Heart left ventricle (tissue), 16 donors: ENCODE measurements at regions of chr10 and their contacts with region 1.

Region 1: GRCh38 chr10:76303682-76304316 is 872.4 kb downstream of the LRMDA start:
- DNase-seq: peak; percentile 64 to 85 (median 74)
- ATAC-seq: peak; percentile 95 to 99 (median 98)
- H3K4me3 ChIP-seq: no peak overlapping the region
- H3K27ac ChIP-seq: peak overlapping the region in 3 of 12 donors; percentile 25 to 62 (median 58)
- H3K4me1 ChIP-seq: peaks cover 0 to 30% (median 15%) of the 10 kb centered on the region in 12 donors
- H3K27me3 ChIP-seq: no peaks in the 10 kb centered on the region
- CTCF ChIP-seq: peak; percentile 41 to 75 (median 61)
- POLR2A ChIP-seq: no peak

Region 2: DNA sequence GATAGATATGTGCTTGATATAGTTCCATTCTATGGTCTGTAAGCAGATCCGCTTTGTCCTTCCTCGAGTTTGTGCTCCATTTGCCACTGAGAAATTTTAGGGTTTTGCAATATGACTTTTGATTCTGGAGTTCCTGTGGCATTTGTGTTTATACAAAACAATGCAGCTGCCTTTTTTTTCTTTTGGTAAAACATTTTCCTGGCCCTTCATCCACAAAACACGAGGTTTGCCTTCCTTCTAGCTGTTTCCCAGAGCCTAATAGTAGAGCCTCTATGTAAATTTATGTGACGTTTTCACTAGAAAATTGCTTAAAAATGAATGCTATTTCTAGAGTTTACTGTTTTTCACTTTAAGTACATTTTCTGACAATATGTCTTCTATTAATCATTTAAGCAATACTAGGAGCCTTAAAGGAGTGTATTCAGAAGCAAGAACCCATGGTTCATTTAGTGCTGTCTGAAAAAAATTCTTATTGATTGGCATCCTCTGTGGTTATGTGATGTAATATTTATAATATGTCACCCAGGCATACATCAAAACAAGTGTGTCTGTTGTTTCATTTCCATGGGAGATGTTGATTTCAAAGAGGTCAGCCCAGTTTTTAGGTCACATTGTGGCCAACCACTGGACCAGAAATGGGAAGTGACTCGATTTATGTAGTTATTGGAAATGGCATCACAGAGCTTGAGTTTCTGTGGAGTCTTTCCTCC is 254.1 kb before region 1 on chr10:
- intact Hi-C with region 1: loop called in 1 of 10 experiments (anchors 10 kb)
- DNase-seq: no peak
- ATAC-seq: peak in 1 of 4 donors; percentile 48
- H3K4me3 ChIP-seq: no peak overlapping the region
- H3K27ac ChIP-seq: no peak overlapping the region
- H3K4me1 ChIP-seq: peaks cover 0 to 12% (median 0%) of the 10 kb centered on the region in 12 donors
- H3K27me3 ChIP-seq: no peaks in the 10 kb centered on the region
- CTCF ChIP-seq: no peak
- POLR2A ChIP-seq: no peak

Region 3: GRCh38 chr10:76558586-76558985 is 254.8 kb after region 1 on chr10:
- intact Hi-C with region 1: loop called in 1 of 10 experiments (anchors 10 kb)
- DNase-seq: no peak
- ATAC-seq: no peak
- H3K4me3 ChIP-seq: no peak overlapping the region
- H3K27ac ChIP-seq: peak overlapping the region in 1 of 12 donors; percentile 35
- H3K4me1 ChIP-seq: peaks cover 0 to 35% (median 10%) of the 10 kb centered on the region in 12 donors
- H3K27me3 ChIP-seq: no peaks in the 10 kb centered on the region
- CTCF ChIP-seq: no peak
- POLR2A ChIP-seq: no peak

Region 4: DNA sequence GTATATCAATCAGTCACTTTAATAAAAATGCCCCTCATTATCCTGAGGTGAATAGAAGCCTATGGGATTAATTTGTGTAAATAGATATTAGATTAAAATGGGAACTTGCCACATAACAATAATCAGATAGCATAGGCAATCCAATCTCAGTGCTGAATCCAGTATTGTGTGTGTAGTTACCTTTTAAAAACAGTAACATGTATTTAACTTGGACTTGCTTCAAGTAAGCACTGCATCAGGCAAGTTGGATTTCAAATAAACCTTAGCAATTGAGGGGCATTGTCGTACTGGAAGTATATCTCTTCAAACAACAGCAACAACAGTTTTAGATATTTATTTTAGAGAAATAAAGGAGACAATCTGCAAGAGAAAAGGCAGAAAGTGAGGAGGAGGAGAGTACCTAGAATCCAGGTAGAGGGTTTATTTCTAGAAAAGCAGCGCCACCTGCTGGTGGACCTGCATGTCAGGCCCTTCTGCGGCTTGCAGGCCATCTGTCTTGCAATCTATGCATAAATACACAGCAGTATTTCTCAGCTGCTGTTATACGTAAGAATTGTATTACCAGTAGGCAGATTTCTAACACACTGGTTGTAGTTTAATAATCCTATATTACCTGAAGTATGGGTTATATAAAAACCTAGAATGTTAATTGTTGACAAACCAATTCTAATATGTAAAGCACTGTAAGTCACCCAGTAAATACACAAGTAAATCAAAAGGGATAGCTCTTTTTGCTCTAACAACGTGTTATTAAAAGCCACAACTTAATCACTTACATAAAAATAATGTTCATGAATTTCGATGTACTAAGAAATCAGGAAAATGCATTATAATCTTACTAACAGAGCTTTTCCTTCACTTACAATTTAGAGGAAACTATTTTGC is 681.0 kb after region 1 on chr10:
- intact Hi-C with region 1: loop called in 2 of 10 experiments (anchors 10 kb)
- DNase-seq: peak; percentile 57 to 76 (median 65)
- ATAC-seq: peak in 3 of 4 donors; percentile 72 to 89 (median 80)
- H3K4me3 ChIP-seq: no peak overlapping the region
- H3K27ac ChIP-seq: no peak overlapping the region
- H3K4me1 ChIP-seq: no peaks in the 10 kb centered on the region
- H3K27me3 ChIP-seq: no peaks in the 10 kb centered on the region
- CTCF ChIP-seq: peak; percentile 80 to 97 (median 92)
- POLR2A ChIP-seq: no peak

Region 5: GRCh38 chr10:77004917-77005564 is 701.2 kb after region 1 on chr10:
- intact Hi-C with region 1: loop called in 1 of 10 experiments (anchors 10 kb)
- DNase-seq: peak in 1 of 5 donors; percentile 14
- ATAC-seq: peak in 3 of 4 donors; percentile 58 to 77 (median 75)
- H3K4me3 ChIP-seq: no peak overlapping the region
- H3K27ac ChIP-seq: peak overlapping the region in 2 of 12 donors; percentile 5 to 57
- H3K4me1 ChIP-seq: peaks cover 0 to 9% (median 0%) of the 10 kb centered on the region in 12 donors
- H3K27me3 ChIP-seq: peaks cover 0 to 4% (median 0%) of the 10 kb centered on the region in 9 donors
- CTCF ChIP-seq: peak; percentile 61 to 88 (median 78)
- POLR2A ChIP-seq: no peak